CD8-positive, alpha-beta T cell (primary cell): ENCODE measurements at regions of chr3 and their contacts with region 1.

Region 1: GRCh38 chr3:9396700-9397521 is 504 bp upstream of the SETD5 start:
- DNase-seq: peak; percentile 98 to 100 (median 99)
- ATAC-seq: peak; percentile 67
- H3K4me3 ChIP-seq: peak overlapping the region; percentile 68 to 73
- H3K4me3 Mint-ChIP-seq: peak overlapping the region; percentile 94
- H3K27ac ChIP-seq: peak overlapping the region; percentile 90 to 97
- H3K27ac Mint-ChIP-seq: peak overlapping the region; percentile 97
- H3K4me1 ChIP-seq: peaks cover 69% of the 10 kb centered on the region
- H3K4me1 Mint-ChIP-seq: peaks cover 72% of the 10 kb centered on the region
- H3K27me3 ChIP-seq: no peaks in the 10 kb centered on the region
- H3K27me3 Mint-ChIP-seq: no peaks in the 10 kb centered on the region
- CTCF ChIP-seq: no peak

Region 2: DNA sequence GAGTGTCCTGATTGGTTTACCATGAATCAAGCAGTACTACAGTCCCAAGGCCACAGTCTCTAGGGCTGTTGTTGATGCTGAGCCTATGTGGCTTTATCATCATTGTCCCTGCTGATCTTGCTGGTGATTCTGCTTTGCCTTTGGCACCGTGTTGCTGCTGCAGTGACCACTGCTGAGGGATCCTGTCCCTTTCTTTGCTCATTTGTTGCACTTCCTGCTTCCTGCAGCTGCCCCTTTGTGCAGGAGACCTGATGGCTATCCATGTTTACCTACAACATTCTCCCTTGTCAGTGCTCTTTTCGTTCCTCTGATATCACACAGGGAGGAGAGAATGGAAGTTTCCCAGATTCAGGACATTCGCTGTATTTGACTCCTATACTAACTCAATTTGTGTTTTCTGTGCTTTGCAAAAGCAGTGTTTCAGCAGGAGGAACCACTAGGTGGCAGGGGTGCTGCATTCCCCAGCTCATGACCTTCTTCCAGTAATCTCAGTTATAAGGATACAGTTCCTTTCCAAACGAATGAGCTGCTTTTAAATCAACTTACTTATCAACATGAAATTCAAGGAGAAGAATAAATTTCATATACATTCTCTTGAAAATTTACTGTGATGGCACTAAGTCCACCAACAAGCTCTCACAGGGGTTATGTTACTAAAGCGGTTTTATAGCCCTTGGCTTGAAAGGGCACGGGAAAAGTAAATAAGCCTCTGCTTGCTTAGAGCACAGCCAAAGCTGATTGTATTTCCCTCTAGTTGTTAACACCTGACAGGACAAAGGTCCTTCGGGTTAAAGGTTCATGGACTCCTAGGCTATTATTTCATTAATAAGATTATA is 43.8 kb before region 1 on chr3:
- CTCF ChIA-PET with region 1: interaction called, 10 read pairs
- POLR2A ChIA-PET with region 1: no interaction called
- intact Hi-C with region 1: no loop called
- DNase-seq: peak; percentile 22 to 77 (median 63)
- ATAC-seq: peak; percentile 88
- H3K4me3 ChIP-seq: no peak overlapping the region
- H3K4me3 Mint-ChIP-seq: no peak overlapping the region
- H3K27ac ChIP-seq: no peak overlapping the region
- H3K27ac Mint-ChIP-seq: no peak overlapping the region
- H3K4me1 ChIP-seq: no peaks in the 10 kb centered on the region
- H3K4me1 Mint-ChIP-seq: peaks cover 4% of the 10 kb centered on the region
- H3K27me3 ChIP-seq: no peaks in the 10 kb centered on the region
- H3K27me3 Mint-ChIP-seq: no peaks in the 10 kb centered on the region
- CTCF ChIP-seq: peak; percentile 98

Region 3: DNA sequence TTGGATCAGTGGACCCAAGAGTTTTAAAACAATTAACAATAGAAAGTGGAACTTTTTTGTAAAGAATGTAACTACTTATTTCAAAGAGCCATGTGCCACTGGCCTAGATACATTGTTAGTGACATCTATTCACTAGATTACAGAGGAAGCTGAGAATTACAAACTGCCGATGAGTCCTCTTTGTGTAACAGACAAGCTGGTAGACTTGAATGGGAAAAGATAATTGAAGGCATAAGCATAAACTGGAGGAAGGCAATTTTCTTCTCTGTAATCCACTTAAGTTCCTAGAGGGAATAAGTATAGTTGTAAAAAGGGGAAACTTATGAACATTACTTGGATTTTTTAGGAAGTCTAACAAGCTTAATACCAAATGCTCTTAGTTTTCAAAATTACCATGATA is 18.9 kb before region 1 on chr3:
- CTCF ChIA-PET with region 1: interaction called, 6 read pairs
- POLR2A ChIA-PET with region 1: interaction called, 16 read pairs
- intact Hi-C with region 1: no loop called
- DNase-seq: no peak
- ATAC-seq: no peak
- H3K4me3 ChIP-seq: no peak overlapping the region
- H3K4me3 Mint-ChIP-seq: no peak overlapping the region
- H3K27ac ChIP-seq: no peak overlapping the region
- H3K27ac Mint-ChIP-seq: peak overlapping the region; percentile 60
- H3K4me1 ChIP-seq: peaks cover 9% of the 10 kb centered on the region
- H3K4me1 Mint-ChIP-seq: peaks cover 39% of the 10 kb centered on the region
- H3K27me3 ChIP-seq: no peaks in the 10 kb centered on the region
- H3K27me3 Mint-ChIP-seq: no peaks in the 10 kb centered on the region
- CTCF ChIP-seq: no peak

Region 4: GRCh38 chr3:9416139-9416780 is 19.3 kb after region 1 on chr3:
- CTCF ChIA-PET with region 1: interaction called, 3 read pairs
- POLR2A ChIA-PET with region 1: interaction called, 20 read pairs
- intact Hi-C with region 1: no loop called
- DNase-seq: no peak
- ATAC-seq: no peak
- H3K4me3 ChIP-seq: no peak overlapping the region
- H3K4me3 Mint-ChIP-seq: no peak overlapping the region
- H3K27ac ChIP-seq: no peak overlapping the region
- H3K27ac Mint-ChIP-seq: peak overlapping the region; percentile 11
- H3K4me1 ChIP-seq: peaks cover 25% of the 10 kb centered on the region
- H3K4me1 Mint-ChIP-seq: peaks cover 66% of the 10 kb centered on the region
- H3K27me3 ChIP-seq: no peaks in the 10 kb centered on the region
- H3K27me3 Mint-ChIP-seq: no peaks in the 10 kb centered on the region
- CTCF ChIP-seq: no peak

Region 5: DNA sequence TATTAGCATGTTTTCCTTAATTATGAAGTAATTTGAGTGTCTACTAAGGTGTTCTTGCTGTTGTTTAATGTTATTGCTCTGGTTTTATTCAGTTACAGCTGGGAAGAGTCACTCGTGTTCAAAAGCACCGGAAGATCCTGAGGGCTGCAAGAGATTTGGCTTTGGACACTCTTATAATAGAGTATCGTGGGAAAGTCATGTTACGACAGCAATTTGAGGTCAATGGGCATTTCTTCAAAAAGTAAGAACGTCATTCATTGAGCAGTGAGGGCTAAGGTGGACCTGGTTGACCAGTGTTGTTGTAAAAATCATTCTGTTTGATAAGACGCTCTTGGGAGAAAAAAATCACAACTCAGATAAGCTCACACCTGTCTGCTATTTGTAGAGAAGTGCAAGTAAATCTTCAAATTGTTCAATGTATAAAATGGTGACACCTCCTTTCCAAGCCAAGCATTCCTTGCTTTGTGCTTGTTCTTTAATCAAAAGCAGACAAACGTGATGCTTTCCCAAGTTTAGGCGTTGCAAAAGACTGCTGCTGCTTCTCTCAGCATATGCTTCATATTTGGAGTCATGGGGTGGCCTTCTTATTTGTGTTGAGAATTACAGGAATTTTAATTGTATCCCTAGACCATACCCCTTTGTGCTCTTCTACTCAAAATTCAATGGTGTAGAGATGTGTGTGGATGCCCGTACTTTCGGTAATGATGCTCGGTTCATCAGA is 44.8 kb after region 1 on chr3:
- CTCF ChIA-PET with region 1: no interaction called
- POLR2A ChIA-PET with region 1: interaction called, 5 read pairs
- intact Hi-C with region 1: loop called in 1 of 2 experiments (anchors 5 kb)
- DNase-seq: no peak
- ATAC-seq: no peak
- H3K4me3 ChIP-seq: no peak overlapping the region
- H3K4me3 Mint-ChIP-seq: no peak overlapping the region
- H3K27ac ChIP-seq: no peak overlapping the region
- H3K27ac Mint-ChIP-seq: no peak overlapping the region
- H3K4me1 ChIP-seq: no peaks in the 10 kb centered on the region
- H3K4me1 Mint-ChIP-seq: peaks cover 3% of the 10 kb centered on the region
- H3K27me3 ChIP-seq: no peaks in the 10 kb centered on the region
- H3K27me3 Mint-ChIP-seq: no peaks in the 10 kb centered on the region
- CTCF ChIP-seq: no peak

Region 6: GRCh38 chr3:9749645-9750555 is 353.0 kb after region 1 on chr3 and contains the start of gene OGG1:
- CTCF ChIA-PET with region 1: no interaction called
- POLR2A ChIA-PET with region 1: no interaction called
- intact Hi-C with region 1: loop called in 1 of 2 experiments (anchors 1 kb)
- DNase-seq: peak; percentile 84 to 98 (median 95)
- ATAC-seq: peak; percentile 93
- H3K4me3 ChIP-seq: peak within 1 kb of the TSS; percentile 79 to 94
- H3K4me3 Mint-ChIP-seq: peak within 1 kb of the TSS; percentile 96
- H3K27ac ChIP-seq: peak within 1 kb of the TSS; percentile 50 to 52
- H3K27ac Mint-ChIP-seq: peak within 1 kb of the TSS; percentile 93
- H3K4me1 ChIP-seq: peaks cover 35% of the 10 kb centered on the region
- H3K4me1 Mint-ChIP-seq: peaks cover 44% of the 10 kb centered on the region
- H3K27me3 ChIP-seq: no peaks in the 10 kb centered on the region
- H3K27me3 Mint-ChIP-seq: no peaks in the 10 kb centered on the region
- CTCF ChIP-seq: no peak
- total RNA-seq, gene OGG1: 4.9 to 7.9 TPM

Region 7: DNA sequence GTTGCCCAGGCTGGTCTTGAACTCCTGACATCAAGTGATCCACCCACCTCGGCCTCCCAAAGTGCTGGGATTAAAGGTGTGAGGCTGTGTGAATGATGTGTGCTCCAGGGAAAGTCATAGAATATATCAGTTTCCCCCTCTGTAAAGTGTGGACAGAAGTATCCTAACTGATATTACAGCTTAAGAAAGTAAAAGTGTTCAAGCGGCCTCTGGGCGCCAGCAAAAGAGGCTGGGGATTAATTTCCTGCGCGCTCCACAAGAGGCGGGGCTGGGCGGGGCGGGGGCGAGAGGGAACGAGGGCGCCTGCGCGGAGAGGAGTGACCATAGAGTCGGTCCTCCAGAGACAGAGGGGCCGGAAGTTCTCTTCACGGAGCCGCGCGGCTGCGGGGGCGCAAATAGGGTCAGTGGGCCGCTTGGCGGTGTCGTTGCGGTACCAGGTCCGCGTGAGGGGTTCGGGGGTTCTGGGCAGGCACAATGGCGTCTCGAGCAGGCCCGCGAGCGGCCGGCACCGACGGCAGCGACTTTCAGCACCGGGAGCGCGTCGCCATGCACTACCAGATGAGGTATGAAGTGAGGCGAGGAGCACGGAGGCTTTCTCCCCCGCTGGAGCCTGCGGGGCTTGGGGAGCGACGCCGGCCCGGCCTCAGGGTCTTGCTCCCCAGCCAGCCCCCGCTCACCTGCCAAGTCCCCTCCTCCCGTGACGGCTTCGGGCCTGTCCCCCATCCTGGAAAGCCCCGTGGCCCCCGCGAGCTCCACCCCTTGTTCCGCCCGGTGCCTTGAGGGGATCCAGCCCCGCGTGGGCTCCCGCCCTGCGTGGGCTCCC is 493.5 kb after region 1 on chr3 and contains the start of gene JAGN1:
- CTCF ChIA-PET with region 1: no interaction called
- POLR2A ChIA-PET with region 1: no interaction called
- intact Hi-C with region 1: loop called in 1 of 2 experiments (anchors 5 kb)
- DNase-seq: peak; percentile 86 to 94 (median 91)
- ATAC-seq: peak; percentile 92
- H3K4me3 ChIP-seq: peak within 1 kb of the TSS; percentile 95 to 96
- H3K4me3 Mint-ChIP-seq: peak within 1 kb of the TSS; percentile 98
- H3K27ac ChIP-seq: peak within 1 kb of the TSS; percentile 99 to 100
- H3K27ac Mint-ChIP-seq: peak within 1 kb of the TSS; percentile 100
- H3K4me1 ChIP-seq: peaks cover 16% of the 10 kb centered on the region
- H3K4me1 Mint-ChIP-seq: peaks cover 40% of the 10 kb centered on the region
- H3K27me3 ChIP-seq: no peaks in the 10 kb centered on the region
- H3K27me3 Mint-ChIP-seq: no peaks in the 10 kb centered on the region
- CTCF ChIP-seq: no peak
- total RNA-seq, gene JAGN1: 13.4 to 14.5 TPM